Activated CD4-positive, alpha-beta T cell treated with anti-CD3 and anti-CD28 coated beads for 36 hours (primary cell): ENCODE measurements at regions of chr2 and their contacts with region 1.

Region 1: GRCh38 chr2:232142049-232142448 is 180.5 kb downstream of the DIS3L2 start:
- DNase-seq: peak; percentile 61
- ATAC-seq: peak; percentile 57
- H3K4me3 Mint-ChIP-seq: no peak overlapping the region
- H3K27ac Mint-ChIP-seq: no peak overlapping the region
- H3K4me1 Mint-ChIP-seq: peaks cover 37% of the 10 kb centered on the region
- H3K27me3 Mint-ChIP-seq: no peaks in the 10 kb centered on the region

Region 2: GRCh38 chr2:232260075-232260474 is 118.0 kb after region 1 on chr2:
- CTCF ChIA-PET with region 1: no interaction called
- POLR2A ChIA-PET with region 1: no interaction called
- intact Hi-C with region 1: no loop called
- DNase-seq: no peak
- ATAC-seq: no peak
- H3K4me3 Mint-ChIP-seq: no peak overlapping the region
- H3K27ac Mint-ChIP-seq: no peak overlapping the region
- H3K4me1 Mint-ChIP-seq: no peaks in the 10 kb centered on the region
- H3K27me3 Mint-ChIP-seq: no peaks in the 10 kb centered on the region

Region 3: GRCh38 chr2:232432598-232433184 is 290.6 kb after region 1 on chr2:
- CTCF ChIA-PET with region 1: no interaction called
- POLR2A ChIA-PET with region 1: no interaction called
- intact Hi-C with region 1: loop called in 1 of 2 experiments (anchors 5 kb)
- DNase-seq: peak; percentile 26
- ATAC-seq: peak; percentile 77
- H3K4me3 Mint-ChIP-seq: no peak overlapping the region
- H3K27ac Mint-ChIP-seq: no peak overlapping the region
- H3K4me1 Mint-ChIP-seq: no peaks in the 10 kb centered on the region
- H3K27me3 Mint-ChIP-seq: no peaks in the 10 kb centered on the region

Region 4: DNA sequence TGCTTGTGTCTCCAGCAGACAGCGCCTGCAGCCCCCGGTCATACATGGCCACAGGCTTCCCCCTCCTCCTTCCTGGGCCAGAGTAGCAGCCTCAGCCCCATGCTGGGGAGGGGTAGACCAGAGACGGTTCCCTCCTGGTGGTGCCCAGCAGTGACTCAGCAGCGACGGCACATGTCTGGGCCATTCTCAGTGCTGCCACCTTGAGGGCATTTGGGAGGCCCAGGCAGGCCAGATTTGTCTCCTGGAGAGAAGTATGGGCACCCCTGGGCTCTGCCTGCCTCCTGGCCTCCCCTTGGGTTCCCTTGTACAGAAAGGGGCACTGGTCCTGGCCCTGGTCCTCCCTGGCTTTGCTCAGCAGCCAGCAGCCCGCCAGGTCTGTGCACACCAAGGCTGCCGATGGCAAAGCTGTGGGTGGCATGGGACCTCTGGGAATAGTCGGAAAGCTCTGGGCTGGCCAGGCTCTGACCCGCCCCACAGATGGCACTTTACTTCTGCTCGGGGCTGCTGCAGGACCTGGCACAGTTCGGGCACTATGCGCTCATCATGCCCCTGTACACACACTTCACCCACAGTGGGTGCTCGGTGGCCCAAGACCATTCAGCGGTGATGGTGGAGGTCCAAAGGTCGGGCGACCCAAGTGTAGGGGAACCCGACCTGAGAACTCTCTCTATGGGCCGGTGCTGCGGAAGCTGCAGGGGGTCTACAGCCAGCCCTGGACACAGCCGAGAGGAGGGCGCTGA is 302.5 kb after region 1 on chr2:
- CTCF ChIA-PET with region 1: no interaction called
- POLR2A ChIA-PET with region 1: no interaction called
- intact Hi-C with region 1: loop called in 1 of 2 experiments (anchors 5 kb)
- DNase-seq: peak; percentile 88
- ATAC-seq: peak; percentile 82
- H3K4me3 Mint-ChIP-seq: no peak overlapping the region
- H3K27ac Mint-ChIP-seq: no peak overlapping the region
- H3K4me1 Mint-ChIP-seq: peaks cover 3% of the 10 kb centered on the region
- H3K27me3 Mint-ChIP-seq: peaks cover 2% of the 10 kb centered on the region